ENCODE measurements at regions of chr10 and their contacts with region 1.

Region 1: GRCh38 chr10:121608469-121609190 is 10.4 kb upstream of the FGFR2 start:
- DNase-seq: peak in 1 of 2 donors; percentile 71
- H3K4me3 ChIP-seq: peak overlapping the region; percentile 43 to 52
- H3K27ac ChIP-seq: no peak overlapping the region
- H3K4me1 ChIP-seq: peaks cover 0 to 8% (median 3%) of the 10 kb centered on the region in 4 donors
- H3K27me3 ChIP-seq: peaks cover 0 to 12% of the 10 kb centered on the region in 2 donors
- CTCF ChIP-seq: peak; percentile 86 to 89

Region 2: DNA sequence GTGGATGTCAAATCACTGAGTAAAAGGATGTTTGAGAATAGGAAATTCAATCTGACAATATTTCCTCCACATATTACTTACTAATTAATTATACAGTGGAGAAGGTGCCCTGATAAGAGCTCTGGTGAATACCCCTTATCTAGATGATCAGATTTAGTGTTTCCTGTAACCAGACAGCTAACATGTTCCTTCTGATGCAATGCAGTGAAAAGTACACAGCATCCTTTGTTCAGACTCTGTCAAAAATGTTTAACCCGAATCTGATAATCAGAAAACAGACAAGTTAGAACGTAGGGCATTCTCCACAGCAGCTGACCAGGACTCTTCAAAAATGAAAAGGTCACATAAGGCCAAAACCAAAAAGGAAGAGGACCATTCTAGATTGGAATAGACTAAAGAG is 711.3 kb before region 1 on chr10:
- intact Hi-C with region 1: no loop called
- DNase-seq: no peak
- H3K4me3 ChIP-seq: no peak overlapping the region
- H3K27ac ChIP-seq: no peak overlapping the region
- H3K4me1 ChIP-seq: no peaks in the 10 kb centered on the region
- H3K27me3 ChIP-seq: no peaks in the 10 kb centered on the region
- CTCF ChIP-seq: no peak

Region 3: GRCh38 chr10:120948889-120949608 is 659.6 kb before region 1 on chr10:
- intact Hi-C with region 1: loop called (anchors 5 kb)
- DNase-seq: peak; percentile 47 to 77
- H3K4me3 ChIP-seq: peak overlapping the region; percentile 44 to 56
- H3K27ac ChIP-seq: no peak overlapping the region
- H3K4me1 ChIP-seq: peaks cover 0 to 23% (median 11%) of the 10 kb centered on the region in 4 donors
- H3K27me3 ChIP-seq: peaks cover 0 to 19% of the 10 kb centered on the region in 2 donors
- CTCF ChIP-seq: peak; percentile 87 to 88